ENCODE measurements at regions of chr5 and their contacts with region 1.

Region 1: GRCh38 chr5:159844267-159845121 is 71.8 kb upstream of the ADRA1B start:
- DNase-seq: no peak
- H3K4me3 ChIP-seq: no peak overlapping the region
- CTCF ChIP-seq: no peak

Region 2: GRCh38 chr5:159764283-159765134 is 80.0 kb before region 1 on chr5:
- in situ Hi-C with region 1: loop called (anchors 5 kb)
- DNase-seq: peak; percentile 62
- H3K4me3 ChIP-seq: no peak overlapping the region
- CTCF ChIP-seq: no peak

Region 3: GRCh38 chr5:159777049-159777660 is 67.3 kb before region 1 on chr5:
- in situ Hi-C with region 1: no loop called
- DNase-seq: no peak
- H3K4me3 ChIP-seq: no peak overlapping the region
- CTCF ChIP-seq: no peak